ENCODE measurements at regions of chr15 and their contacts with region 1.

Region 1: DNA sequence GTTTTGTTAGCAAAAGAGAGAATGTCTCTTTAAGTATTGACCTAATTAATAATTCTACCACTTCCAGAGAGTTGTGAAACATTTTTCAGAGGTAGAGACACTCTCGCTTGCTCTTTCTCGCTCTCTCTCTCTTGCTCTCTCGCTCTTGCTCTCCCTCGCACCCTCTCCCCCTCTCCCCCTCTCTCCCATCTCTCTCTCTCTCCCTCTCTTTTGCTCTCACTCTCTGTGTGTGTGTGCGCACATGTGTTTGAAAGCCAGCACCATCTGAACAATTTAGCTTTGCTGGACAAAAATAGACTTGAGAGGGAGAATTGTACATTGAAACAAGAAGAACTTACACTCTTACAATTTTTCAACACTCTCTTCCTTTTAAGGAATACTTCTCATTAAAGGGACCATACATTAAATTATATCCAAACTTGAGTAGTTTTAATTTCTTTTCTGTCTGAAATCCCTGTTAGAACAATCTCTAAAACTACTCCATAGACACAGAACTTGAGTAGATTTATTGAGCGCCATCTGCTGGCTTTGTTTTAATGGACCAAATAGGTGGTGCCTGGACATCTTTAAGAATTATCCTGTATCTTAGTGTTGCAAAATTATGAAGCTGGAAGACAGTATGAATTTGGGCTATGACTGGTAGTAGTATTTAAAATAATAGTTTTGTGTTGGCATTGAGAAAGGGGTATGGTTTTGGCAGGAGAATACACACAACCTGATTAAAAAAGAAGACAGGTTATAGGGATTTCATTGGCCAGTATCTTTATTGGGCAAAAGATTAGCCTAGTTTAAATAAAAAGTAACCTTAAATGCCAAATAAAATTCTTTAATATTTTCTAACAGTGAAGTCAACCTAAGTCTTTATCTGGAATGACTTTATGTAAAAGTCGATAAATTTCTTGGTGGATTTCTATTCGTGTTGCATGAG is 124.6 kb downstream of the AKAP13 start:
- DNase-seq: peak; percentile 64
- ATAC-seq: no peak
- H3K4me3 Mint-ChIP-seq: no peak overlapping the region
- H3K27ac Mint-ChIP-seq: no peak overlapping the region
- H3K4me1 Mint-ChIP-seq: peaks cover 64% of the 10 kb centered on the region
- H3K27me3 Mint-ChIP-seq: no peaks in the 10 kb centered on the region

Region 2: GRCh38 chr15:85296615-85297402 is 208.2 kb before region 1 on chr15:
- CTCF ChIA-PET with region 1: interaction called, 29 read pairs
- POLR2A ChIA-PET with region 1: no interaction called
- intact Hi-C with region 1: loop called (anchors 1 kb)
- DNase-seq: peak; percentile 79
- ATAC-seq: peak; percentile 100
- H3K4me3 Mint-ChIP-seq: no peak overlapping the region
- H3K27ac Mint-ChIP-seq: peak overlapping the region; percentile 38
- H3K4me1 Mint-ChIP-seq: peaks cover 11% of the 10 kb centered on the region
- H3K27me3 Mint-ChIP-seq: peaks cover 1% of the 10 kb centered on the region

Region 3: DNA sequence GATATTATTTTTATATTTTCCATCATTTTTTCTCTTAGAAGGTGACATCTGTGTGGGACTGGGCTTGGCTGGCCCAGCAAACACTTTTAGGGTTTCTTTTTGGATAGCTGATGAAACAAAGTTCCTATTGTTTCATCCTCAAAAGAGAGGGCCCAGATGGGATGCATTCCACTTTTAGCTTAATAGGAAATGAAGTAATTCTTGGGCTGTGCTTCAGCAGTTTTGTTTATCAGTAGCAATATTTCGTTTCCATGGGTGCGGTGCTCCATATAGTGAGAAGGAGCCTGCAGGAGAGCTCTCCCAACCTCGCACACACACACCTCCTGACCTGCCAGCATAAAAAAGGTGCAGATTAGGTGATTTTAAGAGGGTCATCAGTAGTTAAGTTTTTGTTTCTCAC is 22.9 kb after region 1 on chr15:
- CTCF ChIA-PET with region 1: interaction called, 12 read pairs
- POLR2A ChIA-PET with region 1: no interaction called
- intact Hi-C with region 1: no loop called
- DNase-seq: no peak
- ATAC-seq: no peak
- H3K4me3 Mint-ChIP-seq: no peak overlapping the region
- H3K27ac Mint-ChIP-seq: no peak overlapping the region
- H3K4me1 Mint-ChIP-seq: peaks cover 32% of the 10 kb centered on the region
- H3K27me3 Mint-ChIP-seq: no peaks in the 10 kb centered on the region